ENCODE measurements at regions of chr6 and their contacts with region 1.

Region 1: GRCh38 chr6:143806282-143807102 is 36.6 kb upstream of the LTV1 start:
- DNase-seq: peak in 1 of 2 donors; percentile 59
- ATAC-seq: no peak
- H3K4me3 ChIP-seq: no peak overlapping the region
- H3K27ac ChIP-seq: no peak overlapping the region
- H3K4me1 ChIP-seq: peaks cover 0 to 8% of the 10 kb centered on the region in 2 donors
- H3K27me3 ChIP-seq: no peaks in the 10 kb centered on the region

Region 2: GRCh38 chr6:143689848-143690247 is 116.6 kb before region 1 on chr6:
- intact Hi-C with region 1: loop called in 1 of 2 experiments (anchors 10 kb)
- DNase-seq: no peak
- ATAC-seq: no peak
- H3K4me3 ChIP-seq: no peak overlapping the region
- H3K27ac ChIP-seq: peak overlapping the region; percentile 60 to 78
- H3K4me1 ChIP-seq: peaks cover 6 to 12% of the 10 kb centered on the region in 2 donors
- H3K27me3 ChIP-seq: no peaks in the 10 kb centered on the region

Measured in aorta (tissue), 5 donors.